ENCODE measurements at regions of chr15 and their contacts with region 1.

Region 1: GRCh38 chr15:82749951-82750830 is 40.5 kb upstream of the AP3B2 start:
- DNase-seq: peak; percentile 91 to 95 (median 93)
- ATAC-seq: peak; percentile 97 to 99 (median 99)
- H3K4me3 ChIP-seq: peak overlapping the region; percentile 25 to 95 (median 77)
- H3K27ac ChIP-seq: peak overlapping the region; percentile 27 to 95 (median 90)
- H3K4me1 ChIP-seq: peaks cover 0 to 36% (median 17%) of the 10 kb centered on the region in 12 donors
- H3K27me3 ChIP-seq: no peaks in the 10 kb centered on the region
- CTCF ChIP-seq: no peak
- POLR2A ChIP-seq: peak in 1 of 2 donors; percentile 82

Region 2: DNA sequence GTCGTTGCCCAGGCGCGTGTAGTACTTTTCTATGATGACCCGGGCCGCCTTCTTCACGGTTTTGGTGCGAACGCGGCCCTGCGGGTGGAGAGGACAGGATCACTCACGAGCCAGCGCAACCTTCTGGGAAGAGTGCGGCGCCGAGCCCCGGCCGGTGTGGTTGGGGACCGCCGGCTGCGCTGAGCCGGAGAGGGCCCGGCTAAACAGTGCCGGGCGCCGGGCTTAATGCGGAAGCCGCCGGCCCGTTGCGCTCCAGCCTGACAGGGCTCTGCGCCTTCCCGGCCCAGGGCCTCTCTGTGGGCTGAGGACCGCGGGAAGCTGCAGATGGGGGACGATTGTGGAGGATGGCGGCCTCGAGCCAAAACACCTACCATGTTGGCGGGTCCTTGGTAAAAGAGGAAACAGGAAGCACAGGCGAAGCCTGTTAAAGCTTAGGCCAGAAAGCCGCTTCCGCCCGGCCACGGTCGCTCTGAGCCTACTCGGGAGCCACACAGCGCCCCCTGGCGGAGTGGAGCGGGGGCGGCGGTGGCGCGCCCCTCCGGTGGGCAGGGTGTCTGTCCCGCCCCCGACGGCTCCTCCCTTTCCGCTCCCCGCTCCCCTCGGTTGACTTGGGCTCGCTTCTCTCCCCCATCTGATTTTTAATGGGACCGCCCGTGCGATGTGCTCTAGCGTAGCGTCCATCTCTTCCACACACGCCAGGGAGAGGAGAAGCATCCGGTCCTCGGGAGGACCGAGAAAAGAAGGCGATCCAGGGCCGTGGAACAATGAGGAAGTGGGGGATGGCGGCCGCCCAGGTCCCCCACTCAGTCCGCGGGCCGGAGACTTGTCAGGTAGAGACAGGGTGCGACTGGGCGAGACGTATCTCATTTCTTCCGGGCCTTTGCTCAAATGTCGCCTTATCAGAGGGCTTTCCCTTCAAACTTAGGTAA is 209.9 kb before region 1 on chr15 and contains the start of gene RPS17:
- intact Hi-C with region 1: loop called in 3 of 10 experiments (anchors 2 to 10 kb)
- DNase-seq: peak; percentile 96 to 98 (median 97)
- ATAC-seq: peak; percentile 96 to 98 (median 98)
- H3K4me3 ChIP-seq: peak within 1 kb of the TSS; percentile 64 to 99 (median 77)
- H3K27ac ChIP-seq: peak within 1 kb of the TSS; percentile 69 to 94 (median 84)
- H3K4me1 ChIP-seq: peaks cover 6 to 47% (median 20%) of the 10 kb centered on the region in 12 donors
- H3K27me3 ChIP-seq: no peaks in the 10 kb centered on the region
- CTCF ChIP-seq: peak; percentile 99 to 100 (median 100)
- POLR2A ChIP-seq: peak; percentile 49 to 87
- total RNA-seq, gene RPS17: 621 to 1,280 (median 873) TPM

Region 3: GRCh38 chr15:82809404-82810060 is 59.3 kb after region 1 on chr15 and contains the start of gene WHAMM:
- intact Hi-C with region 1: loop called in 5 of 10 experiments (anchors 5 to 10 kb)
- DNase-seq: peak; percentile 98 to 99 (median 99)
- ATAC-seq: peak; percentile 93 to 97 (median 95)
- H3K4me3 ChIP-seq: peak within 1 kb of the TSS; percentile 71 to 99 (median 89)
- H3K27ac ChIP-seq: peak within 1 kb of the TSS; percentile 96 to 100 (median 99)
- H3K4me1 ChIP-seq: peaks cover 0 to 51% (median 33%) of the 10 kb centered on the region in 12 donors
- H3K27me3 ChIP-seq: no peaks in the 10 kb centered on the region
- CTCF ChIP-seq: peak in 3 of 12 donors; percentile 8 to 35 (median 23)
- POLR2A ChIP-seq: peak; percentile 90 to 96
- total RNA-seq, gene WHAMM: 4.6 to 9.1 (median 6.3) TPM

Region 4: DNA sequence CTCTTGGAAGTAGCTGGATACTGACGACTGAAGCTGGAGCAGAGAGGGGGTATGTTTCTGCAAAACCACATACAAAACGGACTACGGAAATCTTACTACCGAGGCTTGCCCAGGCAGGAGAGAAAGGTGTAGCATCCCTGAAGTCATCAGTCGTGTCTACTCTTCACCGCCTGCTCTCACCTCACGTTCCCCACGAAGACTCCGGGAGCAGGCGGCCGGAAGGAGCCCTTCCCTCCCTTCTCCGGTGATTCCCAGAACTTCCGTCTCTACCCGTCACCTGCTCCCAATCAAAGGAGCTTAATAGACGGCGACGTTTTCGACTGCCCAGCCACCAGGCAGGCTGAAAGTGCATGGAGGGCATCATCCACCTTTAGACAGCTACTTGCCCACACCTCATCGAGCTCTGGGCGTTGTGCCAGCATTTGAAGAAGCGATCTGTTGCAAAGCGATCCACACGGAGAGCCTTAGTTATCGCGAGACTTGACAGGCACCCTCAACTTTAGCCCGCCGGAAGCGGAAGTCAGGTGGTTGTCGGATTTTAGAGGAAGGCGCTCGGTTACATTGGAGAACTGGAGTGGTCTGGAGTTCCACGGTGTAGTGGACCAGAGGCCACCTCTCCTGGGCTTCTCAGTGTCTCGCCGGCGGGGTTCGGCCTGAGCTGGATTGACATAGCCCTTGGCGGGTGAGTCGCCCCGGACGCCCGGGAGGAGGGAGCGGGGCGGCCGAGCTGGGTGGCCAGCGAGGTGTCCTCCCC is 235.7 kb after region 1 on chr15 and contains the start of gene RAMAC:
- intact Hi-C with region 1: loop called in 1 of 10 experiments (anchors 10 kb)
- DNase-seq: peak; percentile 91 to 96 (median 93)
- ATAC-seq: peak; percentile 89 to 98 (median 98)
- H3K4me3 ChIP-seq: peak within 1 kb of the TSS; percentile 53 to 98 (median 79)
- H3K27ac ChIP-seq: peak within 1 kb of the TSS; percentile 21 to 87 (median 78)
- H3K4me1 ChIP-seq: peaks cover 0 to 20% (median 15%) of the 10 kb centered on the region in 12 donors
- H3K27me3 ChIP-seq: no peaks in the 10 kb centered on the region
- CTCF ChIP-seq: no peak
- POLR2A ChIP-seq: peak in 1 of 2 donors; percentile 49
- total RNA-seq, gene RAMAC: 11.0 to 17.0 (median 14.9) TPM

Measured in heart left ventricle (tissue), 16 donors.